Right ventricle myocardium inferior (tissue), 1 donor: ENCODE measurements at regions of chr2 and their contacts with region 1.

Region 1: DNA sequence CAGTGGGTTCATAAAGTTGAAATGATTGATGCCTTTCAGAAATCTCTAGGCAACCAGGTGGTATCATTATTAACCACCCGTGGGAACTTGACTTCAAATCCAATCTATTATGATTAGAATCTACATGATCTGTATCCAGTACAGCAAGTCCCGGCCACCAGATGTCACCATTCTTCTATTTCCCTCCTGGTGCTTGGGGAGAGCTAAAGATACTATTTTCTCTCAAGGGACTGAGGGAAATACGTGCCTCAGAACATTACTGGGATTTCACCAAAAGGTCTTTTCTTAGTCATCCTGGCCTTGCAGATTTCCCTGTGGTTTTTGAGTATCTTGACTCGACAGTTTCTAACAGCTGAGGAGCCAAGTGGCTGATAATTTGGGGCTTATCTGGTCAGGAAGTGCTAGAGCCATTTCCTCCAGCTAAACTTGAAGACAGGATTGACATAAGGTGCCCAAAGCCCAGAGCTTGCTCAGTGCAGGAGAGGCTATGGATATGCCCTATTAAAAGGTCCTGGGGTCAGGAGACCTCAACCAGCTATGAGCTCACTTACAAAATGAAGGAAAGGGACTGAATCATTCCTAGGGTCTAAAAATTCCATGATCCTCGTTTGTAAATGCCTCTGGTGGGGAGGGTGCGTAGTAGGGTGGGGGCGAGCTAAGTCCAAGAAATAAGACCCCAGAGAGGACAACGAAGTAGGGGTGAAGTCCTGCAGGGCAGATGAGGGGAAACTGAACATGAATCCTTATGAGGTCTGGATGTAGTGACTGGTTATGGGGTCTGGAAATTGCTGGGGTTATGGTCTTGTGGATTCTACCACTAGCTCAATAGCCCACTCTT is 135.4 kb upstream of the MGAT5 start:
- DNase-seq: no peak
- ATAC-seq: peak; percentile 53

Region 2: DNA sequence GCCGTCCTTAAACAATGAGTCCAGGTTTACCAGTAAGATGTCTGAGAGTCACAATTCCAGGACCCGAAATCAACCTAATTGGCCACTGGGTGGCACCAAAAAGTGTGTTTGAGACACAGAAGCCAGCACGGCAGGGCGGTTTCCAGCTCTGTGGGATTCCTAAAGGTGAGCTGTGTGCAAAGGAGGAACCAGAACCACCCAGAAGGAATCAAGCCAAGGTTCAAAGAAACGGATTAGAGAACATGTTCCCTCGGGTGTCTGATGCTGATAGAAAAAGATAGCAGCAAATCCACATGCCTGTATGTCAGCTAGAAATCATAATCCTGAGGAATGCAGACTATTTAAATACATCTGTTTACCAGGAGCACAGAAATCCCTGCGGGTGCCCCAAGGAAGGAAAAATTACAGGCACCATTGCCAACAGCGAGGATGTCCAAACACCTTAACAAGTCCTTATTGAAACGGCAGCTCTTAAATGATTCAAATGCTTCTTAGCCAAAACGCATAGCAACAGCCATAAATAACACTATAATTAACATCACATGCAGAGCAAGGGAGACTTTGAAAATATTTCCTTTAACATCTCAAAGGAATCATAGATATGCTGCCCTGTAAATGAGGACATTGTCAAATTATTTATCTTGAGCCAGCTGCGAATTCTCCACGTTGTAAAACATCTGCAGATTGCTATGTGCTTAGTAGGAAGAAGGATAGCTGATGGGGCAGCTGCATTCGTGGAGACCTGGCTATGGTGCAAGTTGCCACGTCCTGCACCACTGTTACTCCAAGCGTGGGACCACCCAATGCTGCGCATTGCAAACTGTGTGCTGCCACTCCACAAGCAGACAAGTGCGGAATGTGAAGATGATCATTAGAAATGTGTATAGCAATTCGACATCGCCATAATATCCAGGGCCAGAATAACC is 231.5 kb before region 1 on chr2:
- intact Hi-C with region 1: loop called (anchors 5 kb)
- DNase-seq: peak; percentile 79
- ATAC-seq: peak; percentile 76

Region 3: DNA sequence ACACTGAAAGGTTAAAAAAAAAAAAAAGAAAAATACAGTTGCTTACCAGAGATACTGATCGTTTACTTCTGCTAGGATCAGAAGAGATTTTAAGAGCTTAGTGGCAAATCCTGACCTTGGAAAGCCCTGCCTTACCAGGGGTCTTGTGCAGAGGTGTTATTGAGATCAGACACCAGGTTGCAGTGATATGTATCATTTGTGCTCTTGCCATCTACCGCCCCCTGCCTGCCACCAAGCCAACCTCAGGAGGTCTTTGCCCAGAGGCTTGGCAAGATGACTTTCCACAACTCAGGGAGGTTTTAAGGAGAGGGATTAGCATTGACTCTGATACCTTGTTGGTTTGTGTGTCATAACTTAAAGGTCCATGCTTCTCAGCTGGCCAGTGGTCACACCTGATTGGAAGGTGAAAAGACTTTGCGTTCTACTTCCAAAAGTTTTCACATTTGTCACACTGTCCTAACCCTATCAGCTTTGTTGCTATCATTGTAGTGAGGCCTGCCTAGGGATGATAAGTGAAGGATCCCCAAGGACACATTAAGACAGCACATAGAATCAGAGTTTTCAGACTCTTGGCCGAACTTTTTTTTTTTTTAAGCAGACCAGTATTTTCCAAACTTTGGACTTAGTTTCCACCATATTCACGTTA is 89.2 kb after region 1 on chr2:
- intact Hi-C with region 1: loop called (anchors 5 kb)
- DNase-seq: no peak
- ATAC-seq: peak; percentile 49

Region 4: GRCh38 chr2:134268265-134268664 is 149.8 kb after region 1 on chr2:
- intact Hi-C with region 1: loop called (anchors 2 kb)
- DNase-seq: no peak
- ATAC-seq: peak; percentile 60

Region 5: DNA sequence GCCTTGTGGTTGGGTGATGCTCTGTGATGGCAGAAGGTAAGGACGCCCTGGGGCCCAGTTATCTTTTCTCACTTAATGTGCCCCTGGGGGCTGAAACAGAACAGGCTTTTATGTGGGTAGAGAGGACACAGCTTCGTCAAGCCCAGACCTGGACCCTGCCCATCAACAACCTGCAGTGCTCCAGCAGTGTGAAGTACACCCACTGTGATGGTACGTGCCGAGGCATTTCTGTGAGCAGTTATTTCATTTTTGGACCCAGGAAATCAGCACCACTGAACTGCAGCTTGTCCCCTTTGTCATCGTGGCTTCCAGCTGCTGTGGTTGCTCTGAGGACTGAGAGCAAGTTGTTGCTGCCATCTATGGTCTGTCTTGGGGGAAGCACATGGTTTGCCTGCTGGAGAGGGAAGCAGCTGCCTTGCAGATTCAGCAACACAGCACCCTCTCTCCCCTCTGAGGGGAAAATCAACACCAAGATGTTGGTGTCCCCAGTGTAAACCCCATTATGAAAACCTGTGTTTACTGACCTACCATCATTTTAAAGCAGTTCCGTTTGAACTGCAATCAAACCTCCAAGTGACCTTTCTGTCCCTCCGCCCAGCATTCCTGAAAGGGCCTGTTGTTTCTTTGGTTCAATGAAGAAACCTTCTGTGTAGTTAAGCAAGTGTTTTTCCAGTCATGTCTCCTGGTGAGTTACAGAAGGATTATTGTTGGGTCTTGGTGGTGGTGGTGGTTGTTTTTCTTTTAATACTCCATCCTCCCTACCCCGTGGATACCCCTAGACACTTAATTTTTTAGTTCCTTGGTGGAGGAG is 293.5 kb after region 1 on chr2:
- intact Hi-C with region 1: loop called (anchors 2 kb)
- DNase-seq: no peak
- ATAC-seq: peak; percentile 96